HepG2 (cell line): ENCODE measurements at regions of chrX and their contacts with region 1.

Region 1: GRCh38 chrX:31036895-31037294 is 34.9 kb downstream of the FTHL17 start:
- DNase-seq: peak; percentile 42
- ATAC-seq: peak; percentile 93
- H3K4me3 ChIP-seq: no peak overlapping the region
- H3K27ac ChIP-seq: no peak overlapping the region
- H3K4me1 ChIP-seq: no peaks in the 10 kb centered on the region
- H3K27me3 ChIP-seq: no peaks in the 10 kb centered on the region
- CTCF ChIP-seq: peak; percentile 70
- EP300 ChIP-seq: no peak
- POLR2A ChIP-seq: no peak
- RAD21 ChIP-seq: no peak

Region 2: DNA sequence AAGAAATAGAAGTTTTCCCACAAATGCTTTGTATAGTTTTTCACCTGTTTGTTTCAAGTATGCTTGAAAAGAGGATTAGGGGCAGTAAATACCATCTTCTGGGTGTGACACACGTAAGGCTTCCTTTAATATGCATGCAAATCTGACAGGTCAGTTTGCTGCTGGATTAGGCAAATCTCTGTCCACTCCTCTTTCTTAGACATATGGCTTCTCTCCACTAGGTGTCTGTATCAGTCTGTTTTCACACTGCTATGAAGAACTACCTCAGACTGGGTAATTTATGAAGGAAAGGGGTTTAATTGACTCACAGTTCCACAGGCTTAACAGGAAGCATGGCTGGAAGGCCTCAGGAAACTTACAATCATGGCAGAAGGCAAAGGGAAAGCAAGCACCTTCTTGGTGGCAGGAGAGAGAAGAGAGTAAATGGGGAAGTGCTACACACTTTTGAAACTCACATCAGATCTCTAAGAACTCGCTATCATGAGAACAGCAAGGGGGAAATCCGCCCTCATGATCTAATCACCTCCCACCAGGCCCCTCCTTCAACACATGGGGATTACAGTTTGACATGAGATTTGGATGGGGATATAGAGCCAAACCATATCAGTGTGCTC is 214.7 kb before region 1 on chrX:
- CTCF ChIA-PET with region 1: no interaction called
- POLR2A ChIA-PET with region 1: no interaction called
- in situ Hi-C with region 1: no loop called
- intact Hi-C with region 1: loop called (anchors 5 kb)
- DNase-seq: peak; percentile 18
- ATAC-seq: peak; percentile 86
- H3K4me3 ChIP-seq: no peak overlapping the region
- H3K27ac ChIP-seq: no peak overlapping the region
- H3K4me1 ChIP-seq: 0 out of 2 replicates have a peak, but pooled peaks cover 9% of the 10 kb centered on the region
- H3K27me3 ChIP-seq: no peaks in the 10 kb centered on the region
- CTCF ChIP-seq: peak; percentile 68
- EP300 ChIP-seq: no peak
- POLR2A ChIP-seq: no peak
- RAD21 ChIP-seq: no peak

Region 3: DNA sequence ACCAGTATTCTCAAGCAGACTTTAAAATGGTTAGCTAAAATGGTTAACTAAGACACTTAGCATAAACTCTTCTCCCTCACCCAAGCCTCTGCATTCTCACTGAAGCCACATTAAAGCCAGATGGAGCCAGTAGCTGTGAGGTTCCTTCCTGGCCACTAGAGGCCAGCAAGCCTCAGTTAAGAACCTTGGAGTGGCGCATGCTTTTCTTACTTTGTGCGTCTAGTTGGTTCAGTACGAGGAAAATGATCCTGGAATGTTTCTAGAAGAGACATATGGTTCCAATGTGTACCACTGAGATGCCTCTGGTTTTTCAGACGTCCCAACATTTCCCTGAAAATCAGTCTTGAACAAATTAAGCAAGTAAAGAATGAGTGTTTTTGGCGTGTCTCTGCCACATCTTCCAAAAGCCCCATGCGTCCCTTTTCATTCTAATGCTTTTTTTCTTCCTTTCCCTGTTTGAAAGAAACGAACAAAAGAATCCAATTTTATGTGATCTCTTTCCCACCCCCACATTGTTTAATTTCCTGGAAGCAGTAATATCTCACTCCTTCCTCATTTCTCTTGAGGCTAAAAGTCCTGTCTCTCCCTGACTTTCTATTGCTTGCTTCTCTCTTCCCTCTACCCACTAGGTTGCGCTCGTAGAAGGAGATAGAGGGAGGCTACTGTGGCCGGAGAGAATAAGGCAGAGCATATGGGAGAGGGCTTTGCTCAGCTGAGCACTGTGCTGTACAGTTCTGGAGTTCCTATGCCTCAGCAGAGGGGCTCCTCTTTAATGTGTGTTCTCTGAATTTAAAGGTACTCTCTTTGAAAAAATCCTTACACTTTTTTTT is 64.9 kb before region 1 on chrX:
- CTCF ChIA-PET with region 1: interaction called, 7 read pairs
- POLR2A ChIA-PET with region 1: no interaction called
- in situ Hi-C with region 1: no loop called
- intact Hi-C with region 1: loop called (anchors 1 kb)
- DNase-seq: peak; percentile 53
- ATAC-seq: peak; percentile 93
- H3K4me3 ChIP-seq: peak overlapping the region in 1 of 3 experiments; percentile 31; a peak in 3 of 6 replicates
- H3K27ac ChIP-seq: no peak overlapping the region
- H3K4me1 ChIP-seq: peaks cover 46% of the 10 kb centered on the region
- H3K27me3 ChIP-seq: no peaks in the 10 kb centered on the region
- CTCF ChIP-seq: peak; percentile 78
- EP300 ChIP-seq: no peak
- POLR2A ChIP-seq: no peak
- RAD21 ChIP-seq: peak; percentile 57

Region 4: DNA sequence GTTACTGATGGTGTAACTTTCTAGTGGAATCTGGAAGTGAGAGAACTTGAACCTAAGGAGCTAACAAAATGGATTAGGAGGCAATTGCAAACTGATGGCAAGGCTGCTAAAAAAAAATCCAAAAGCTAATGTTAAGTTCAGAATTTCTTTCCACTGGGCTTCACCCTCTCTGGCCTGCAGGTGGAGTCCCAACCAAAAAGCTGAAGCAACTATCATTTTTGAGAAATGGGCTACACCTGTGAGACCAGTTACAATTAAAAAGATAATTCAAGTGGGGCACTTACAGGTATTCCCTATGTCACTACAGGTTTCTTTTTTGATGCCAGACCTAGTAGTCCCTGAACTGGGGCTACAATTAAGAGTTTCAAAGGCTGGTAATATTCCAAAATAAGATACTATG is 177.0 kb after region 1 on chrX:
- CTCF ChIA-PET with region 1: no interaction called
- POLR2A ChIA-PET with region 1: no interaction called
- in situ Hi-C with region 1: no loop called
- intact Hi-C with region 1: loop called (anchors 1 kb)
- DNase-seq: no peak
- ATAC-seq: peak; percentile 55; the same call in 2 of the 3 replicates
- H3K4me3 ChIP-seq: no peak overlapping the region
- H3K27ac ChIP-seq: no peak overlapping the region
- H3K4me1 ChIP-seq: 0 out of 2 replicates have a peak, but pooled peaks cover 10% of the 10 kb centered on the region
- H3K27me3 ChIP-seq: no peaks in the 10 kb centered on the region
- CTCF ChIP-seq: peak; percentile 51
- EP300 ChIP-seq: no peak
- POLR2A ChIP-seq: no peak
- RAD21 ChIP-seq: peak; percentile 38; the same call in 1 of the 2 replicates

Region 5: GRCh38 chrX:31293409-31293808 is 256.5 kb after region 1 on chrX:
- CTCF ChIA-PET with region 1: interaction called, 5 read pairs
- POLR2A ChIA-PET with region 1: no interaction called
- in situ Hi-C with region 1: loop called (anchors 10 kb)
- intact Hi-C with region 1: no loop called
- DNase-seq: peak; percentile 2
- ATAC-seq: peak; percentile 67
- H3K4me3 ChIP-seq: no peak overlapping the region
- H3K27ac ChIP-seq: no peak overlapping the region
- H3K4me1 ChIP-seq: no peaks in the 10 kb centered on the region
- H3K27me3 ChIP-seq: no peaks in the 10 kb centered on the region
- CTCF ChIP-seq: peak; percentile 50
- EP300 ChIP-seq: no peak
- POLR2A ChIP-seq: no peak
- RAD21 ChIP-seq: no peak

Region 6: DNA sequence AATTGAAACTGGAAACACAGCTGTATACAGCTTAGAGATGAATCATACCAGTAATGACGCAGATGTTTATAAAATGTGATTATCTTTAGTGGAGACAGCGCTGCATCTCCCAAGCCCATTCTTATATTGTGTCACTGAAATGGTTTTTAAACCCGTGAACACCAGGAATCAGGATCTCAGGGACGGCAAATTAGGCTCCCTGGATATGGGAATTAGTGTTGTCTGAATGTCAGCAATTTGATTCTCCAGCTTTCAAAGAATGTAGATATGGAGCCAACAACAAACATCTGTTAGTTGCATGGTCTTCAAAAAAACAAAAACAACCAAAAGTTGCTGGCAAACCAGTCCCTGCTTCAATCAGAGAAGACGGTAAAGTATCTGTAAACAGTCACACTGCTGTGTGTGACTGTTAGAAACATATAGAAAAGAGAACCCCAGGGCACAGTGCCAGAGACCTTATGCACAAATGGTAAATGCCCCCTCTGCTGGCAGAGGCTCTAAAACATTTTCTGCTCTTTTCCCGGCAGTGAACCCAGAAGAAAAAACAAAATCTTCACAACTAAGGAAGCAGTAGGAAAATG is 386.8 kb after region 1 on chrX:
- CTCF ChIA-PET with region 1: interaction called, 3 read pairs
- POLR2A ChIA-PET with region 1: no interaction called
- in situ Hi-C with region 1: loop called (anchors 10 kb)
- intact Hi-C with region 1: loop called (anchors 2 kb)
- DNase-seq: peak; percentile 15
- ATAC-seq: peak; percentile 65
- H3K4me3 ChIP-seq: no peak overlapping the region
- H3K27ac ChIP-seq: no peak overlapping the region
- H3K4me1 ChIP-seq: no peaks in the 10 kb centered on the region
- H3K27me3 ChIP-seq: no peaks in the 10 kb centered on the region
- CTCF ChIP-seq: peak; percentile 52
- EP300 ChIP-seq: no peak
- POLR2A ChIP-seq: no peak
- RAD21 ChIP-seq: no peak

Region 7: GRCh38 chrX:31658360-31658759 is 621.5 kb after region 1 on chrX:
- CTCF ChIA-PET with region 1: interaction called, 6 read pairs
- POLR2A ChIA-PET with region 1: no interaction called
- in situ Hi-C with region 1: loop called (anchors 5 kb)
- intact Hi-C with region 1: loop called (anchors 2 kb)
- DNase-seq: peak; percentile 1
- ATAC-seq: no peak
- H3K4me3 ChIP-seq: no peak overlapping the region
- H3K27ac ChIP-seq: no peak overlapping the region
- H3K4me1 ChIP-seq: no peaks in the 10 kb centered on the region
- H3K27me3 ChIP-seq: no peaks in the 10 kb centered on the region
- CTCF ChIP-seq: peak; percentile 40
- EP300 ChIP-seq: no peak
- POLR2A ChIP-seq: no peak
- RAD21 ChIP-seq: no peak